ENCODE measurements at regions of chr11 and their contacts with region 1.

Region 1: DNA sequence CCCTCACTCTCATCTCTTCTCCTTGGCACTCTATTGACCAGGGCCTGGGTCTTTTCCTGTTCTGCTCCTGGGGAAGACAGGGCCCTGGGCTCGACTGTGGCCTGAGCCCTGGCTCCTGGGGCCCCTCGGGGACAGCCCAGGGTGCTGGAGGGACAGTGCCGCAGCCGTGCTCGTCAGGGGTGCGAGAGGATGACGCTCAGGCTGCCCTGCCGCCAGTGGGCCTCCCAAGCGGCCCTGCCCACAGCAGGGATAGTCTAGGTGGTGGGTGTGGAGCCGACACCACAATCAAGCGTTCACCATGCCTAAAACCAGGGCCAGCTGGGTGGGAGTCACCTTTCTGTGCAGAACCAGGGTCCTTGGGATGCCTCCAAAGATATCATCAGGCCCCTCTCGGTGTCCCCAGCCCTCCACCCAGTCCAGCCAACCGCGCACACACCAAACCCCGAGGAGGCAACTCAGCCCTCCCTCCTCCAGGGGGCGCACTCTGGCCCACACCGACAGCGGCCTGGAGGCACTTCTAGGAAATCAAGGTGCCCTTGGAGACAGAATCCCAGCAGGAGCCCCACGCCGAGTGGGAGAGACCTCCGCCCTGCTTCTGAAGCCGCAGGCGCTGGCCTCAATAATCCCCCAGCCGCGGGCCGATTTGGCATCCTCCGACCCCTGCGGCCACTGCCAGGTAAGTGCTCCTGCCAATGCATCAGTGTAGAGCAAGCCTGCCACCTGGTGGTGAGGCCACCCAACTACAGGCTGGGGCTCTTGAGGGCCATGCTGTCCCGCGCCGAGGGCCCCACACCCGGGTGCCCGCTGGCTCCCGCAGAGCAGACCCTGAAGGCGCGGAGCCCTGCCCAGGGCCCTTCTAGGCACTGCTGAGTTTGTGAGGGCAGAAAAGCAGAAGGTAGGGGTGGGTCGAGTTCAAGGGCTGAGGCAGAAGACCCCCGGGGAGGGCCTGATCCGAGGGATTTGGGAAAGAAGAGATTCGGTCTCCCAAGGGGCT is 496.4 kb downstream of the BUD13 start:
- DNase-seq: peak; percentile 70 to 81
- ATAC-seq: peak in 7 of 8 donors; percentile 77 to 90 (median 80)
- H3K4me3 ChIP-seq: peak overlapping the region in 8 of 10 donors; percentile 11 to 45 (median 28)
- H3K27ac ChIP-seq: no peak overlapping the region
- H3K4me1 ChIP-seq: peaks cover 0 to 10% (median 4%) of the 10 kb centered on the region in 9 donors
- H3K27me3 ChIP-seq: peaks cover 0 to 23% (median 8%) of the 10 kb centered on the region in 7 donors
- CTCF ChIP-seq: peak; percentile 93 to 99 (median 98)

Region 2: GRCh38 chr11:114774599-114775361 is 1501.6 kb before region 1 on chr11:
- intact Hi-C with region 1: loop called in 1 of 10 experiments (anchors 5 kb)
- DNase-seq: peak in 1 of 2 donors; percentile 46
- ATAC-seq: peak; percentile 34 to 88 (median 78)
- H3K4me3 ChIP-seq: no peak overlapping the region
- H3K27ac ChIP-seq: no peak overlapping the region
- H3K4me1 ChIP-seq: peaks cover 0 to 14% (median 7%) of the 10 kb centered on the region in 9 donors
- H3K27me3 ChIP-seq: peaks cover 0 to 13% (median 0%) of the 10 kb centered on the region in 7 donors
- CTCF ChIP-seq: peak; percentile 20 to 71 (median 67)

Region 3: DNA sequence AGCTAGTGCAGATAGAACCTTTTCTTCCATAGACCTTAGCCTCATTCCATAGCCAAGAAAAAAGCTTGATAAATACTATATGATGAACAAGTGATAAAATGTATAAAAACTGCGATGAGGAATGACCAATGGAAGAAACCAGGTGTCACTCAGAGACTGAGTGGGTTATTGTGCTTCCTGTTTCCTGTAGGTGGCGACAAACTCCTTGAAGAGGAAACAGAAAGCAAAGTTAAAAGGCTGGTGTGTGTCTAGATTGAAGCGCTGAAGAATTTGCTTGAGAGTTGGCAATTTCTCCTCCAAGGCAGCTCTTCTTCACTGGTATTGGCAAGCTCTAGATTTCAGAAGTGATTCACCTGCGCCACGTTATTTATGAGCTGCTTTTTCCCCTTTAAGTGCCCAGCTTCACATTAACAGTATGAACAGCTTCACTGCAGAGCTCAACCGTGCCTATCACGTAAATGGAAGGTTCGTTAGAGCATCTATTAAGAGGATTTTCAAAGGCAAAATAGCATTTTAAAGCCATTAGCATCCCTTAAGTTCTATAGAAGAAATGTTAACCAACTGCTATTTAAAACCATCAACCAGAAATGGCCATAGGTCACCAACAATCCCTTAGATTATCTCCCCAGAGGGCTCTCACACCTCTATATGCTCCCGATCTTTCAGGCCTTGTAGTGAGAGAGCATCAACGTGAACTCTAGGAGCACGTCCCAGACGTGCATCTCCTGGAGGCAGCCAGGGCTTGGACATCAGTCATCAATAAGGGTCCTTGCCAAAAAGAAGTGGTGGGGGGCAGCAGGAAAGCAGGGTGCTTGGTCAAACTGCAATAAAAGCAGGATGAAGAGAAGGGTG is 951.5 kb before region 1 on chr11:
- intact Hi-C with region 1: loop called in 9 of 10 experiments (anchors 2 to 5 kb)
- DNase-seq: peak in 1 of 2 donors; percentile 16
- ATAC-seq: peak; percentile 49 to 91 (median 71)
- H3K4me3 ChIP-seq: peak overlapping the region in 2 of 10 donors; percentile 17 to 22
- H3K27ac ChIP-seq: no peak overlapping the region
- H3K4me1 ChIP-seq: peaks cover 0 to 6% (median 0%) of the 10 kb centered on the region in 9 donors
- H3K27me3 ChIP-seq: no peaks in the 10 kb centered on the region
- CTCF ChIP-seq: peak; percentile 64 to 88 (median 78)

Region 4: DNA sequence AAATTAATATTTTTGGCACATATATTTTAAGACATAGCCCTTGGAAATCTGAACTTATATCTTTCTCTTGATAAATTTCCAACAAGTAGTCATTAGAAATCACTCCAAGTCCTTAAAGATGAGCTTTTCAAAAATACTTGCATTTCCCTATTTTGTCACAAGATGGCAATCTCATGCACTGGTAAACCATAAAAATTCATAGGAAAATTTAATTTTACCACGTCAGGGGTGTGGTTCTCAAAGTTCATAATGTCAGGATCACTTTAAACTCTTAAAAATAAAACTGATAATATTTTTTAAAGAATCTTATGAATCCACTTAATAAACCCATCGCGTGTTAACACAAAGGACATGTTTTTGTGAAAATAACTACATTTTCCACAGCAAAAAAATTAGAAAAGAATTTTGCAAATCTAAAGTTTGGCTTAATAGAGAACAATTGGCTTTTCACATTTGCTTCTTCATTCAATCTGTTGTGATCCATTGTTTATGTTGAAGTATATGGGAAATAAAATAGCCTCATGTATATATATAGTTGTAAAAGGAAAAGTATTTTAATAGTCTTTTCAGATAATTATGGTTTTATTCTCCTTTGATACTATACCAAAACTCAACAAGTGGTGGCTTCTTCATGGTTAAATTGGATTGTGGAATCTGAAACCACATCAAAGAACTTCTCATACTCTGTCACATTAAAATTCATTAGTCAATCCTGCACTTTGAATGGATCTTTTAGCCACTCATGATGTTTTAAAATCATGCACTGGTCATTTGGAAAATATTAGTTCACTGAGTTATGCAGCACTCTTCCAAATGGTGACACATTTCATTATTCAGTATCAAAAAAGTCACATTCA is 941.2 kb before region 1 on chr11:
- intact Hi-C with region 1: loop called in 6 of 10 experiments (anchors 5 kb)
- DNase-seq: no peak
- ATAC-seq: no peak
- H3K4me3 ChIP-seq: no peak overlapping the region
- H3K27ac ChIP-seq: no peak overlapping the region
- H3K4me1 ChIP-seq: peaks cover 0 to 6% (median 0%) of the 10 kb centered on the region in 9 donors
- H3K27me3 ChIP-seq: no peaks in the 10 kb centered on the region
- CTCF ChIP-seq: peak; percentile 52 to 81 (median 76)

Region 5: DNA sequence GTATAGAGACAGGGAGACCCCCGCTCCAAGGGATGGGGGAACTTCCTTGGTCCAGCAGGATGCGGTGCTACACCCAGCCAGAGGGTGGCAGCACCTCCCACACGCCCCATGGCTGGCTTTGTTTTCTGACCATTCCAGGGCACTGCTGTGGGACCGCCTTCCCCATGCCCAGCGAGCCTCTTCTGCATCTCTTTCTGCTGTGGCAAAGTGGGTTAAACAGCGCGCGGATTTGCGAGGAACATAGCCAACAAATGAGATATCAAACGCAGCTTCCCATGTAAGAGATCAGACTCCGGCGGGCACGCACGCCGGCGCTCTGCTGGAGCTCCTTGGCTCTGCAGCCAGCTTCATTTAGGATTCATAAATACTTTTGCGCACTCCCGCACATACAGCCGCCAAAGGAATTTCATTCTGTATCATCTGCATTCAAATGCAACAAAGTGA is 286.3 kb before region 1 on chr11:
- intact Hi-C with region 1: loop called in 4 of 10 experiments (anchors 5 kb)
- DNase-seq: peak; percentile 16 to 27
- ATAC-seq: peak in 6 of 8 donors; percentile 29 to 72 (median 62)
- H3K4me3 ChIP-seq: peak overlapping the region in 4 of 10 donors; percentile 1 to 33 (median 20)
- H3K27ac ChIP-seq: no peak overlapping the region
- H3K4me1 ChIP-seq: peaks cover 0 to 4% (median 0%) of the 10 kb centered on the region in 9 donors
- H3K27me3 ChIP-seq: peaks cover 0 to 4% (median 0%) of the 10 kb centered on the region in 7 donors
- CTCF ChIP-seq: peak; percentile 55 to 85 (median 76)

Region 6: DNA sequence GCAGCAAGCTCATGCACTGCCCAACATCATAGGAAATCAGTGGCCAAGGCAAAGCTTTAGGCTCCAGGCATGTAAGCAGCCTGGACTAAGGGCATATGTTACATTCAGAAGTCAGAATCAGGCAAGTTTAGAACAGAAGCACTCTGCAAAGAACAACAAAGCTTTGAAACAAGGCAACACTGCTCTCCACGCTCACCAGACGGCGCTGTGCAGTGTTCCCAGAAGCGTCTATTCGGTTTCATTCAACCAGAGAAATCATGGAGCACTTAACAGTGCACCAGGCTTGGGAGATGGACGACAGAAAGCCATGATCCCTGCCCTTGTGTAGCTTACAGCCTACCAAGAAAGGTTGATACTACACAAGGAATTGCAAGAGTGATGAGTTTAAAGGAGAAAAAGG is 59.3 kb before region 1 on chr11:
- intact Hi-C with region 1: loop called in 1 of 10 experiments (anchors 5 kb)
- DNase-seq: peak; percentile 21 to 35
- ATAC-seq: peak in 3 of 8 donors; percentile 35 to 71 (median 55)
- H3K4me3 ChIP-seq: no peak overlapping the region
- H3K27ac ChIP-seq: no peak overlapping the region
- H3K4me1 ChIP-seq: peaks cover 0 to 7% (median 0%) of the 10 kb centered on the region in 9 donors
- H3K27me3 ChIP-seq: peaks cover 0 to 3% (median 0%) of the 10 kb centered on the region in 7 donors
- CTCF ChIP-seq: peak; percentile 32 to 80 (median 60)

Region 7: DNA sequence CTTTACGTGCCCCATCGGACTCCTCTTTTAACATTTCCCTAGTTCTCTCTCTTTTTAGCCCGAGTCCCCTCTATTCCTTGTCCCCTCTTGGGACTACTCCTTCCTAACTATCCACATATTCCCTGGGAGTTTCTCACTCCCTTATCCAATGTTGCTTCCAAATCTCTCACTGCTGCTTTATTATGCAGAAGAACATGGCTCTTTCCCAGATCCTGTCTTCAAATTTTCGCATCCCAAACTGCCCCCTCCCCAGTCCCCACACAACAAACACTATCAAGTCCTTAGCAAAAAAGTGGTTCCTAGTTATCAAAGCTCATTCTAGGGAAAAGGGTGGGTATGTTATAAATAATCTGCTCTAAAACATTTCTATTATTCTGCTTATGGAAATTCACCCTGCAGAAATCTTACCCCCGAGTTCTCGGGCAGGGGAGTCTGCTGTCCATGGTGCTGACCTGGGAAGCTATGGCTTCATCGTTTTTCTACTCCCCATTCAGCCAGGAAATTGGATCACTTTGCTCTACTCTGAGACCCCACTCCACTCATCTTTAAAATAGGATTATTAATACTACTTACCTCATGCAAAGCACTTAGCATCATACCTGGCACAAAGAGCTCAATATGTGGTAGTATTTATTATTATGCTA is 103.0 kb after region 1 on chr11:
- intact Hi-C with region 1: no loop called
- DNase-seq: peak; percentile 30 to 32
- ATAC-seq: no peak
- H3K4me3 ChIP-seq: no peak overlapping the region
- H3K27ac ChIP-seq: no peak overlapping the region
- H3K4me1 ChIP-seq: no peaks in the 10 kb centered on the region
- H3K27me3 ChIP-seq: peaks cover 0 to 37% (median 11%) of the 10 kb centered on the region in 7 donors
- CTCF ChIP-seq: no peak

Measured in heart right ventricle (tissue), 16 donors.